MCF 10A (cell line): ENCODE measurements at regions of chr3 and their contacts with region 1.

Region 1: DNA sequence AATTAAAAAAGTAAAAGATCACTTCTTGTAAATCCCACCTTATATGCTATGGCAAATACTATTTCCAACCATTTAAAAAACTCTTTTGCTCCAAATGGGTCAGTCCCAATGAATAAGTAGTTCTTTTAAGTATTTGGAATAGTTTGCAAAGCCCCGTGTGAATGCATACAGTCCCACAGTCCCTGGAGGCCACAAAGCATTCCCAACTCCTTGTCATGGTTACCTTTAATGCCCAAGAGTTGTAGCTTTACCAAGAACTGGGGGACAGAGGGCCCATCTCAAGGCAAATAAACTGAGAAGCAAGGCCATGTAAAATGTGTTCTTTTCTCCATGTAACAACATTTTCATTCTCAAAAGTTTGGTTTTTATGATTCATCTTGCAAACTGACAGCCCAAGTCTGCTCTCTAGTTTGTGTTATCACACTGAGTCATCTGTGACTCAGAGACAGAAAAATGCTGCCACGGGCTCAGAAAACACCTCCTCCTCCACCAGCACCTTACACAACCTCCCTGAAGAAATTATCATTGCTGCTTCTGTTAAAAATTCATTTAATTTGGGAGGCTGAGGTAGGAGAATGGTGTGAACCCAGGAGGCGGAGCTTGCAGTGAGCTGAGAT is 336.2 kb downstream of the ERC2 start:
- DNase-seq: peak; percentile 95
- H3K4me3 Mint-ChIP-seq: no peak overlapping the region
- H3K27ac Mint-ChIP-seq: no peak overlapping the region
- H3K4me1 Mint-ChIP-seq: peaks cover 36% of the 10 kb centered on the region
- H3K27me3 Mint-ChIP-seq: no peaks in the 10 kb centered on the region
- CTCF ChIP-seq: no peak

Region 2: GRCh38 chr3:55885721-55886120 is 246.4 kb before region 1 on chr3:
- CTCF ChIA-PET with region 1: no interaction called
- POLR2A ChIA-PET with region 1: no interaction called
- intact Hi-C with region 1: loop called (anchors 10 kb)
- DNase-seq: peak; percentile 90
- H3K4me3 Mint-ChIP-seq: peak overlapping the region; percentile 17
- H3K27ac Mint-ChIP-seq: peak overlapping the region; percentile 89
- H3K4me1 Mint-ChIP-seq: peaks cover 20% of the 10 kb centered on the region
- H3K27me3 Mint-ChIP-seq: no peaks in the 10 kb centered on the region
- CTCF ChIP-seq: peak; percentile 25

Region 3: GRCh38 chr3:56086355-56086754 is 45.7 kb before region 1 on chr3:
- CTCF ChIA-PET with region 1: no interaction called
- POLR2A ChIA-PET with region 1: no interaction called
- intact Hi-C with region 1: no loop called
- DNase-seq: no peak
- H3K4me3 Mint-ChIP-seq: no peak overlapping the region
- H3K27ac Mint-ChIP-seq: no peak overlapping the region
- H3K4me1 Mint-ChIP-seq: no peaks in the 10 kb centered on the region
- H3K27me3 Mint-ChIP-seq: no peaks in the 10 kb centered on the region
- CTCF ChIP-seq: no peak

Region 4: GRCh38 chr3:56107157-56107556 is 24.9 kb before region 1 on chr3:
- CTCF ChIA-PET with region 1: no interaction called
- POLR2A ChIA-PET with region 1: no interaction called
- intact Hi-C with region 1: no loop called
- DNase-seq: no peak
- H3K4me3 Mint-ChIP-seq: no peak overlapping the region
- H3K27ac Mint-ChIP-seq: no peak overlapping the region
- H3K4me1 Mint-ChIP-seq: no peaks in the 10 kb centered on the region
- H3K27me3 Mint-ChIP-seq: no peaks in the 10 kb centered on the region
- CTCF ChIP-seq: no peak

Region 5: DNA sequence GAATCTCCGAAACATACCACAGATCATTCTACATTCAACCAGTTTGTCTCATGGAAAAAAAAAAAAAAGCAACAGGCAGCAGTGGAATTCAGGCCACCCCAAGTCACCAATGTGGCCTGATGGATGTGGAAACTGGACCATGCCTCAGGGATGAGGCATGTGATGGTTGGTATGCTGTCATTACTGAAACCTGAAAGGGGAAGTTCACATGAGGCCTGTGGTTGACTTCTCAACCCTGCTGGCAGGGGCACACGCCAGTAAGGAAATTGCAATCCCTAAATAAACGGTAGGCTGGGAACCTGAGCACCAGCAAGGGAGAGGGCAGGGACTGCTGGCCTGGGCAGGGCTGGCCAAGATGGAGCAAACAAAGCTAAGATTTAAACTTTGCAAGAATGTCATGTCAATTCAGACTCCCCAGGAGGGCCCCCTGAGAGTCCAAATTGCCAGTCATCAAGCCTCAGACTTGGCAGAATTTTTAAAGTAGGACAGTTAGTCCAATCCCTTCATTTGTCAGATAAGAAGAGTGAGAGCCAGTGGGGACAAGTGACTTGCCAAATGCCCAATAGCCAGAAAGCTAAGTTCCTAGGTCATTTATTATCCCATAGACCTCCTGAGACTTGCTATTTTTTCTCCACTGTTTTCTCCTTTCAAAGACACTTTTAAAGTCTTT is 25.7 kb after region 1 on chr3:
- CTCF ChIA-PET with region 1: no interaction called
- POLR2A ChIA-PET with region 1: no interaction called
- intact Hi-C with region 1: no loop called
- DNase-seq: peak; percentile 33
- H3K4me3 Mint-ChIP-seq: no peak overlapping the region
- H3K27ac Mint-ChIP-seq: no peak overlapping the region
- H3K4me1 Mint-ChIP-seq: no peaks in the 10 kb centered on the region
- H3K27me3 Mint-ChIP-seq: no peaks in the 10 kb centered on the region
- CTCF ChIP-seq: no peak

Region 6: GRCh38 chr3:56536735-56537134 is 404.7 kb after region 1 on chr3:
- CTCF ChIA-PET with region 1: no interaction called
- POLR2A ChIA-PET with region 1: no interaction called
- intact Hi-C with region 1: no loop called
- DNase-seq: no peak
- H3K4me3 Mint-ChIP-seq: no peak overlapping the region
- H3K27ac Mint-ChIP-seq: no peak overlapping the region
- H3K4me1 Mint-ChIP-seq: no peaks in the 10 kb centered on the region
- H3K27me3 Mint-ChIP-seq: peaks cover 35% of the 10 kb centered on the region
- CTCF ChIP-seq: no peak